H1 (cell line): ENCODE measurements at regions of chr9 and their contacts with region 1.

Region 1: GRCh38 chr9:107425101-107426045 is 64.2 kb downstream of the KLF4 start:
- DNase-seq: peak; percentile 54 to 95
- H3K4me3 ChIP-seq: peak overlapping the region in 1 of 4 experiments; percentile 19; a peak in 3 of 8 replicates
- H3K27ac ChIP-seq: no peak overlapping the region
- H3K4me1 ChIP-seq: no peaks in the 10 kb centered on the region; a peak in 1 of 7 replicates
- H3K27me3 ChIP-seq: peaks cover 0 to 8% (median 7%) of the 10 kb centered on the region in 4 experiments; a peak in 3 of 7 replicates
- CTCF ChIP-seq: peak; percentile 69 to 98 (median 92)
- EP300 ChIP-seq: no peak
- POLR2A ChIP-seq: no peak
- RAD21 ChIP-seq: peak; percentile 59 to 64

Region 2: GRCh38 chr9:107413315-107413714 is 12.1 kb before region 1 on chr9:
- CTCF ChIA-PET with region 1: interaction called, 17 read pairs
- POLR2A ChIA-PET with region 1: no interaction called
- DNase-seq: no peak
- H3K4me3 ChIP-seq: no peak overlapping the region
- H3K27ac ChIP-seq: no peak overlapping the region
- H3K4me1 ChIP-seq: no peaks in the 10 kb centered on the region
- H3K27me3 ChIP-seq: no peaks in the 10 kb centered on the region
- CTCF ChIP-seq: no peak
- EP300 ChIP-seq: no peak
- POLR2A ChIP-seq: no peak
- RAD21 ChIP-seq: no peak

Region 3: GRCh38 chr9:107460203-107461023 is 35.0 kb after region 1 on chr9:
- CTCF ChIA-PET with region 1: interaction called, 33 read pairs
- POLR2A ChIA-PET with region 1: interaction called, 4 read pairs
- DNase-seq: no peak
- H3K4me3 ChIP-seq: no peak overlapping the region
- H3K27ac ChIP-seq: no peak overlapping the region
- H3K4me1 ChIP-seq: peaks cover 0 to 5% (median 2%) of the 10 kb centered on the region in 4 experiments; a peak in 4 of 7 replicates
- H3K27me3 ChIP-seq: peaks cover 0 to 6% (median 4%) of the 10 kb centered on the region in 4 experiments; a peak in 5 of 7 replicates
- CTCF ChIP-seq: no peak
- EP300 ChIP-seq: no peak
- POLR2A ChIP-seq: no peak
- RAD21 ChIP-seq: no peak

Region 4: GRCh38 chr9:107484117-107484723 is 58.8 kb after region 1 on chr9:
- CTCF ChIA-PET with region 1: interaction called, 23 read pairs
- POLR2A ChIA-PET with region 1: interaction called, 5 read pairs
- DNase-seq: no peak
- H3K4me3 ChIP-seq: no peak overlapping the region
- H3K27ac ChIP-seq: no peak overlapping the region
- H3K4me1 ChIP-seq: peaks cover 0 to 22% (median 13%) of the 10 kb centered on the region in 4 experiments; a peak in 6 of 7 replicates
- H3K27me3 ChIP-seq: peaks cover 20 to 27% (median 26%) of the 10 kb centered on the region in 4 experiments
- CTCF ChIP-seq: peak in 2 of 3 experiments; percentile 60 to 67; a peak in 3 of 4 replicates
- EP300 ChIP-seq: no peak
- POLR2A ChIP-seq: no peak
- RAD21 ChIP-seq: peak; percentile 88 to 91

Region 5: DNA sequence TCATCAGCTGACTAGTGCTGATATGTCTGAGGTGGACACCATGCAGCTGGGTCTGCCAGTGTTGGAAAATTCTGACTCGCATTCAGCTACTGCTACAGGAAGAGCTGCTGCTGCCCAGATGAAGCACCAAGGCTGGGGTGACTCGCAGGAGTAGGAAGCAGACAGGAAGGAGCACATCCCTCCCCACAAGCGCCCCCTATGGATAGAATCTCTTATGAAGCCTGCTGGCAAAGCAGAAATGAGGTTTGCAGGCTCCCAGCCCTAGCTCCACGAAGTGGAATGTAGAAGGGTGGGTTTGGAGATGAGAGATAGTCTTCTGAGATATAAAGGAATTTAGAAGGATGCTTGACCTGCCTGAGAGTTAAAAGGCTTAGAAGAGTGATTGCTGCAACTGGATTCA is 987.4 kb after region 1 on chr9:
- CTCF ChIA-PET with region 1: interaction called, 10 read pairs
- POLR2A ChIA-PET with region 1: no interaction called
- DNase-seq: peak; percentile 50 to 70
- H3K4me3 ChIP-seq: no peak overlapping the region
- H3K27ac ChIP-seq: no peak overlapping the region
- H3K4me1 ChIP-seq: no peaks in the 10 kb centered on the region
- H3K27me3 ChIP-seq: no peaks in the 10 kb centered on the region
- CTCF ChIP-seq: peak; percentile 57 to 74 (median 68)
- EP300 ChIP-seq: no peak
- POLR2A ChIP-seq: no peak
- RAD21 ChIP-seq: peak; percentile 65 to 67